ENCODE measurements at regions of chr4 and their contacts with region 1.

Region 1: DNA sequence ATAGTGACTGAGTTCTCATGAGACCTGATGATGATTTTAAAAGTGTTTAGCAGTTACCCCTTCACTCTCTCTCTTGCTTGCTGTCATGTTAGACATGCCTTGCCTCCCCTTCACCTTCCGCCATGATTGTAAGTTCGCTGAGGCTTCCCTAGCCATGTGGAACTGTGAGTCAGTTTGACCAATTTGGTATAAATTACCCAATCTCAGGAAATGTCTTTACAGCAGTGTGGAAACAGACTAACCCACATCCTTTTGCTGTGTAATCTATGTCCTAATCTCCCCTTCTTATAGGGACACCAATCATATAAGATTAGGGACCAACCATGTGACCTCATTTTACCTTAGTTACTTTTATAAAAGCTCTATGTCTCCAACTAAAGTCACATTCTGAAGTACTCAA is 677.8 kb downstream of the ADGRL3 start:
- DNase-seq: no peak
- ATAC-seq: peak; percentile 20
- H3K4me3 ChIP-seq: no peak overlapping the region
- H3K4me3 Mint-ChIP-seq: no peak overlapping the region
- H3K27ac ChIP-seq: no peak overlapping the region
- H3K27ac Mint-ChIP-seq: no peak overlapping the region
- H3K4me1 ChIP-seq: no peaks in the 10 kb centered on the region
- H3K4me1 Mint-ChIP-seq: peaks cover 0 to 3% (median 0%) of the 10 kb centered on the region in 7 donors
- H3K27me3 ChIP-seq: no peaks in the 10 kb centered on the region
- H3K27me3 Mint-ChIP-seq: no peaks in the 10 kb centered on the region

Region 2: DNA sequence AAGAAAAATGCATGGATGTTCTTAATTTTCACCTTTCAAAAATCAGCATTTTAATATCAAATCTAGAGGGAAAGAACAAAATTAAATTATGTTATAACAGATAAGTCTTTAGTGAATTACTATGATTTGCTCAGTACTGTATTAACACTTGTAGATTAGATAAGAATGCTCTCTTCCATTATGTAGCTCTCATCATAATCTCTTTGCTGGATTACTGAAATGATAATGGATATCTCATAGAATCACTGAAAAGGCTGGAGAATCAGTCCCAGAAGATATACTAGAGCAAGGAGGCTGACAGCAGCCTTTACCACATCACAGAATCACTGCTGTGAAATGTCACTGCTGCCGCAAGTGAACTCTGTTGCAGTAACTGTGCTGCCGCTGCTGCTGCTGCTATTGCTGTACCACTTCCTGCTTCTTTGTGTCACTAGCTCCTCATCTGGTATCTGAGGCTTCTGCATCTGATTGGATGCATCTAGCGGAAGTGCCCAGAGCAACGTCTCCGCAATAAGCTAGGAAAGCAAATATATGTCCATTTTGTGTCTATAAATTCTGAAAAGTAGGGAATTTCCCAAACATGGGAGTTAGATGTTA is 60.5 kb after region 1 on chr4:
- CTCF ChIA-PET with region 1: no interaction called
- POLR2A ChIA-PET with region 1: no interaction called
- intact Hi-C with region 1: loop called in 1 of 2 experiments (anchors 10 kb)
- DNase-seq: peak in 1 of 9 donors; percentile 25
- ATAC-seq: peak; percentile 70
- H3K4me3 ChIP-seq: no peak overlapping the region
- H3K4me3 Mint-ChIP-seq: no peak overlapping the region
- H3K27ac ChIP-seq: no peak overlapping the region
- H3K27ac Mint-ChIP-seq: no peak overlapping the region
- H3K4me1 ChIP-seq: no peaks in the 10 kb centered on the region
- H3K4me1 Mint-ChIP-seq: no peaks in the 10 kb centered on the region
- H3K27me3 ChIP-seq: no peaks in the 10 kb centered on the region
- H3K27me3 Mint-ChIP-seq: no peaks in the 10 kb centered on the region

Region 3: GRCh38 chr4:62449538-62449937 is 571.6 kb after region 1 on chr4:
- CTCF ChIA-PET with region 1: no interaction called
- POLR2A ChIA-PET with region 1: no interaction called
- intact Hi-C with region 1: no loop called
- DNase-seq: no peak
- ATAC-seq: no peak
- H3K4me3 ChIP-seq: no peak overlapping the region
- H3K4me3 Mint-ChIP-seq: no peak overlapping the region
- H3K27ac ChIP-seq: no peak overlapping the region
- H3K27ac Mint-ChIP-seq: no peak overlapping the region
- H3K4me1 ChIP-seq: no peaks in the 10 kb centered on the region
- H3K4me1 Mint-ChIP-seq: no peaks in the 10 kb centered on the region
- H3K27me3 ChIP-seq: no peaks in the 10 kb centered on the region
- H3K27me3 Mint-ChIP-seq: no peaks in the 10 kb centered on the region